ENCODE measurements at regions of chr1 and their contacts with region 1.

Region 1: DNA sequence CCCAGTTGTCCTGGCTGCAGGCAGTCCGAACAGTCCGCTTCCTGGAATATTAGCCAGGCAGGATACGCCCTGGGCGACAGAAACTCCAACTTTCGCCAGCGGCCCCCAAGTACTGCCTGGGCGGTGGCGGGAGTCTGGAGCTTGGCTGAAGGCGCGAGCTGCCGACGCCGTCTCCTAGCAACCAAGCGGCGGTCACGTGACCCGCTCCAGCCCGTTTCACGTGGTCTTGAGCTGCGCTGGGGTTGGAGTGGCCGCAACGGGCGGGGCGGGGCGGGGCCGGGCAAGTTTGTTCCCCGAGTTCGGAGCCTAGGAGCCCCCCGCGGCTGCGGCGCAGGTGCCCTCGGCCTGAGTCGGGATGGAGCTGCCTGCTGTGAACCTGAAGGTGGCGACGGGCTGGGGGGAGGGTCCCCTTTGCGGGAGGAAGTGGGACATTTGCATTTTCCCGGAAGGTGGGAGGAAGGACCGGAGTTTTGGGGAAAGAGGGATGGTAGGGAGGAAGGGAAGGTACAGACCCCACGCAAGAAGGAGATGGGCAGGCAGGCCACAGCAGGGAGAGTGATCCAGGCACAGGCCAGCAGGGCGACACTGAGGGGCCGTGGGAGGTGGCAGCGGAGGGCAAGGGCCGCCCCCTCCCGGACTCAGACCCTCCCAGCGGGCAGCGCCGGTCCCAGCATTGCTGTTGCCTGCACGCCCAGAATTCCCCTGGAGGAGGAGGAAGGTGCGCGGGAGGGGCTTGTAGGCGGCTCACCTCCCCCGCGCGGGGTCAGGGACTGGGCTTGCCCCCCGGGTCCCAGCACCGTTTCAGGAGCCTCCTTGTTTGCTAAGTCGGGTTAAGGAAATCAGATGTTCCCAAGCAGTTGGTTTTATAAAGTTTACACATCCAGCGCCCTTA is at the start of gene AGTRAP:
- DNase-seq: peak; percentile 92 to 98 (median 98)
- H3K4me3 ChIP-seq: peak within 1 kb of the TSS; percentile 62 to 99 (median 87)
- H3K27ac ChIP-seq: peak within 1 kb of the TSS; percentile 14 to 98 (median 80)
- H3K27me3 ChIP-seq: no peaks in the 10 kb centered on the region
- CTCF ChIP-seq: peak in 9 of 56 donors; percentile 6 to 25 (median 13)
- total RNA-seq, gene AGTRAP: 5.0 to 40.1 (median 15.7) TPM

Region 2: DNA sequence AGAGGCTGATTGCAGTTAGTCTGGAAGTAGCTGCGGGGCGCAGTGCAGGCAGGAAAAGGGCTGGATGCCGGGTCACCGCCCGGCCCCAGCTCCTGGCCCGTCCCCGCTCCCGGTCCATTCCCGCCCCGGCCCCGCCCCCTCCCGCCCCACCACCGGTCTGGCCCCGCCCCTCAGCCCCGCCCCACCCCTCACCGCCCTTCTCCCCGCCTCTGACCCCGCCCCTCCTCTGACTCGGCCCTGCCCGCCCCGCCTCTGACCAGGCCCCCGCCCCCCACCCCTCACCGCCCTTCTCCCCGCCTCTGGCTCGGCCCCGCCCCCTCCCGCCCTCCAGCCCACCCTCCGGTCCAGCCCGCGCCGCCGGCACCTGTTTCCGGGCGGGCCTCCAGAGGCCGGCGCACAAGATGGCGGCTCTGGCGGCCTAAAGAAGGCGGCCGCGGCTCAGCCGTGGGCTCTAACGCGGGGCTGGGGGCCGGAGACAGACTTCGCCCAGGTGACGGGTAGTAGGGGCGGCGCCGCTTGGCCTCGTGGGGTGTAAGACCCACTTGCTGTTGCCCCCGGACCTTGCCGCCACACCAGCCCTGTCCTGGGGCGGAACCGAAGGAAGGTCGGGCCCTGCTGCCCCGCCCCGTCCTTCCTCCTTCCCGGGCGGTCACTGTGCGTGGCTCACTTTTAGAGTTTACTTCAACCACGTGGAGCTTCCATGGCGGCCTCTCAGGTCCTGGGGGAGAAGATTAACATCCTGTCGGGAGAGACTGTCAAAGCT is 463.1 kb before region 1 on chr1 and contains the start of gene UBIAD1:
- intact Hi-C with region 1: loop called in 1 of 2 experiments (anchors 10 kb)
- DNase-seq: peak; percentile 64 to 87 (median 76)
- H3K4me3 ChIP-seq: peak within 1 kb of the TSS; percentile 64 to 99 (median 92)
- H3K27ac ChIP-seq: peak within 1 kb of the TSS; percentile 67 to 96 (median 90)
- H3K27me3 ChIP-seq: no peaks in the 10 kb centered on the region
- CTCF ChIP-seq: peak in 34 of 56 donors; percentile 1 to 62 (median 36)
- total RNA-seq, gene UBIAD1: 11.4 to 28.1 (median 18.2) TPM

Region 3: DNA sequence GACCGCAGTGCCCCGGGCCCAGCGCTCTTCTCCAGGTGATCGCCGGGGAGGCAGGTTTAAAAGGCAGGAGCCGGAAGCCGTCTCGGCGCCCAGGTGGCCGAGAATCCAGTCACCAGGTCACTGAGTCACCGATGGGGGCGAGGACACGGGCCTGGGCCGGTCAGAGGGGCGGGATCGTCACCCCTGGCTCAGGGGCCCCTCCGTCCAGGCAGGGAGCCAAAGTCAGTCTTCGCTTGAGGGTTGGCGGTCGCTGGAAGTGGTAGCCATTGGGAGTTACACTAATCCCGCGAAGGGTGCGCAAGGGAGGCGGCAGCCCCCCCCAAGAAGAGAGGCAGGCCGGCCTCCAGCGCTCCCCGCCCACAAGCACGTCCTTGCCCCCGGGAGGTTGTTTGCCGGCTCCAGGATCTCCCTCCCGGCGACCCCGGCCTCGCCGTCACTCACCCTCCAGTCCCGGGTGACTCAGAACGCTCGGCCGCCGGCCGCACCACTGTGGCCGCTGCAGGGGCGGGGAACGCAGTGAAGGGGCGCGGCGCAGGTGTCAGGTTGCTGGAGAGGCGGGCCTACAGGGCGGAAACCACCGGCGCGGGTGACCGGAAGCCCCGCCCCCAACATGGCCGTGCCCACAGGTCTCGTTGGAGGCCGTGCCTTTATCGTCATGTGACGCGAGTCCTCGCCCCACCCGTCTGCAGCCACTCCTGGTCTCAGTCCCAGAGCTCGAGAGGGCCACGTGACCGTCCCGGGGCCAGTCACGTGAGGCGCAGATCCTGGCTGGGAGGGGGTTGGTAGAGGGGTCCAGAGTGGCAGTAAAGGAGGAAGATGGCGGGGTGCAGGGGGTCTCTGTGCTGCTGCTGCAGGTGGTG is 69.6 kb after region 1 on chr1 and contains the starts of genes CLCN6 and MTHFR:
- intact Hi-C with region 1: loop called (anchors 2 to 5 kb)
- DNase-seq: peak; percentile 99
- H3K4me3 ChIP-seq: peak within 1 kb of the TSS; percentile 61 to 100 (median 93)
- H3K27ac ChIP-seq: peak within 1 kb of the TSS; percentile 88 to 99 (median 95)
- H3K27me3 ChIP-seq: no peaks in the 10 kb centered on the region
- CTCF ChIP-seq: peak in 16 of 56 donors; percentile 4 to 40 (median 22)
- total RNA-seq, gene CLCN6: 51.7 to 92.9 (median 69.7) TPM
- total RNA-seq, gene MTHFR: 31.4 to 70.6 (median 41.5) TPM

Measured in dorsolateral prefrontal cortex (tissue), 120 donors.